ENCODE measurements at regions of chr2 and their contacts with region 1.

Region 1: GRCh38 chr2:39059366-39059952 is 61.4 kb downstream of the SOS1 start:
- DNase-seq: no peak
- H3K4me3 ChIP-seq: no peak overlapping the region
- CTCF ChIP-seq: peak; percentile 23

Region 2: DNA sequence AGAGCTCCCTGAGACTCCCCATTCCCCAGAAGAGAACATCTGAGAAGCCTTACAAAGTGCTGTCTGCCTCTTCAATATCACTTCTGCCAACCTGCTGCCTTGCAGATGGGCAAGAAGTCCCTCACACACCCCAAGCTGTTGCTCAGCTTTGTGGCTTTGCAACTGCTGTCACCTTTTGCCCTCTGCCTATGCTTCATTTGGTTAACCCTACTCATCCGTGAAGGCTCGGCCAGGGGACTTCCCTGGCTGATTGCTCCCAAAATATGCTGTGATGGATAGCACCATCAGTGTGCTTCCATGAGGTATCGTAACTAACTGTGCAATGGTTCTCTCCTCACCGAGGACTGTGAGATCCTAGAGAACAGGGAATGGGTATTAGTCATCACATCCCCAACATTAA is 894.6 kb before region 1 on chr2:
- CTCF ChIA-PET with region 1: no interaction called
- POLR2A ChIA-PET with region 1: no interaction called
- DNase-seq: no peak
- H3K4me3 ChIP-seq: no peak overlapping the region
- CTCF ChIP-seq: no peak

Region 3: GRCh38 chr2:39124000-39124745 is 64.7 kb after region 1 on chr2:
- CTCF ChIA-PET with region 1: interaction called, 14 read pairs
- POLR2A ChIA-PET with region 1: interaction called, 3 read pairs
- DNase-seq: peak; percentile 68
- H3K4me3 ChIP-seq: peak overlapping the region; percentile 80
- CTCF ChIP-seq: peak; percentile 68